Mammary epithelial cell (primary cell): ENCODE measurements at regions of chr15 and their contacts with region 1.

Region 1: DNA sequence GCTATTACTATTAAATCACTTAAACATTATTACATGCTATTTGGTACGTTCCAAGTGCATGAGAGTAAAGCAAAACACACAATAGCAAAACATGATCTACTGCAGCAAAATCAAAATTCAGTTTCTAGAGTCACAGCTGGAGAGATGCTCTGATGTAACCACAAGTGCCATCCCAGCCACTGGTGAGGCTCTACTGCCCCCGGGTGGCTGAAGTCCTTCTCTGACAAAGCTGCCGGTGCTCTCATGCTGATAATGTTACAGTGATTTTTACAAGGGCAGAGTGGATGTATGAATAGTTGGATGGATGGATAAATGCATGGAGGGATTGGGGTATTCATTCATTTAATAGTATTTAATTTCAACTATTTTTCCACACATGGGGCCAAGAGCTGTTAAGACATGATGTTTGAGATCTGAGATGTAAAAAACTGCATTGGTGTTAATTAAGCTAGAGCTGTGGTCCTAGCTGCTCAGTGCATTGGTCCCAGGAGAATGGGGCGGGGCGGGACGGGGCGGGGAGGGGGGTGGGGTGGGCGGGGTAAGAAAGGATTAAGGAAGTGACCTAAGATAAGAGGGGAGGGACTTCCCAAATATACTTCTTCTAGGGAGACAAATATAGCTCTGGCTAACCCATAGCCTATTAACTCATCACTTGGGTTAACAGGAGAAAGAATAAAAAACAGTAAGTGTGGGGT is 5.3 kb upstream of the SPESP1 start:
- DNase-seq: peak; percentile 68
- H3K4me3 ChIP-seq: no peak overlapping the region
- H3K27ac ChIP-seq: no peak overlapping the region
- H3K4me1 ChIP-seq: no peaks in the 10 kb centered on the region
- H3K27me3 ChIP-seq: no peaks in the 10 kb centered on the region
- CTCF ChIP-seq: peak; percentile 92 to 97

Region 2: DNA sequence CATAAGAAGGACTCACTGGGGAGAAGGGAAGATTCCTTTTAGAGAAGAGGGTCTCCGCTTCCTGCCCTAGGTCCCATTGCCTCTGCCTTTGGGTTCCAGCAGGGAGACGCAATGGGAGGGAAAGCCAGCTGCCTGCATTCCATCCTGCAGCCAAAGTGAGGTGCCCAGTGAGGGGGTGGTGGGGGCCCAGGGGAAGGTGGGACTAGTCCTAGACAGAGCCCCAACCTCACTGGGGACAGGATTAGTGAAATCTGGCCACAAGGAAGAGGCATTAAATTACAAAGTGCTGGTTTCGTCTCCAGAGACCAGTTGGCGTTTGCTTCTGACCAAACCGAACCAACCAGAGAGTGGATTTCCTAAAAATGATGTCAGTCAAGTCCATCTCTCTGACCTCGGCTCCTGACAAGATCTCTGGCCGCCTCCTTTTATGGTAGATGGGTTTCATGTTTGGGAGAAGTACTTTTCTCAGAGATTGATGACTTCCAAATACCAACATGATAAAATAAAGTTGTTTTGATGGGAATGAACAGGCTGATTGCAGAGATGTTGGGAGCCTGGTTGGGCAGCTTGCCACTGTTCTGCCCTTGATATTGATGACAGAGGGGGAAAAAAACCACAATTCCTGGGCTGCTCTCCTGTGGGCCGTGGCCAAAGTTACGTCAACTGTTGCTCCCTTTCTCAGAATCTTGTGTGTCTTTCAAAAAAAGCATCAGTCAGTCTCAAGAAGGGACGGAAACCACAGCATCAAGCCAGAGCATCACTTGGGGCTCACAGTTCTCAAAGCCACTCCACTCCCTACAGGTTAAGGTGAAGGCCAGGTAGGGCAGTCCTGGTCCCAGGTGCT is 517.7 kb before region 1 on chr15:
- CTCF ChIA-PET with region 1: no interaction called
- dilution Hi-C with region 1: no loop called
- in situ Hi-C with region 1: no loop called
- intact Hi-C with region 1: no loop called
- DNase-seq: no peak
- H3K4me3 ChIP-seq: no peak overlapping the region
- H3K27ac ChIP-seq: no peak overlapping the region
- H3K4me1 ChIP-seq: no peaks in the 10 kb centered on the region
- H3K27me3 ChIP-seq: no peaks in the 10 kb centered on the region
- CTCF ChIP-seq: no peak

Region 3: DNA sequence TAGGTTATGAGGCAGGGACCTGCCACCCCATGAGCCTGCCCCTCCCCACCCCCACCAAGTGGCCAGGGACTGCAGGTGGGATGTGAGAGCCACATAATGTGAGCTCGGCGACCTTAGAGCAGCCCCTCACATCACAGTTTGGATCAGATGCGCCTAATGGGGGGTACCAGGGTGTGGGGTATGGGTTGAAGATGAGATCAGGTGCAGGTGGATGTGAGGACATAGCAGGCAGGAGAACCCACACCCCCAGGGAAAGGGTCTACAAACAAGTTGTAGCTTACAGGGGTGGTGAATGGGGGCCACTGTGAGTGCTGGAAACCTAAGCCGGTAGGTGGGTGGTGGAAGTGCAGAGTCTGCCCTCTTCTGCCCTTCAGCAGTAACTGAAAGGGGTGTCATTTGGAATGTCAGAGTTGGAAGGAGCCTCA is 252.2 kb before region 1 on chr15:
- CTCF ChIA-PET with region 1: interaction called, 3 read pairs
- dilution Hi-C with region 1: no loop called
- in situ Hi-C with region 1: no loop called
- intact Hi-C with region 1: loop called (anchors 1 kb)
- DNase-seq: no peak
- H3K4me3 ChIP-seq: no peak overlapping the region
- H3K27ac ChIP-seq: no peak overlapping the region
- H3K4me1 ChIP-seq: peaks cover 14% of the 10 kb centered on the region
- H3K27me3 ChIP-seq: no peaks in the 10 kb centered on the region
- CTCF ChIP-seq: peak; percentile 22 to 36

Region 4: GRCh38 chr15:68730471-68730919 is 194.5 kb before region 1 on chr15:
- CTCF ChIA-PET with region 1: no interaction called
- dilution Hi-C with region 1: no loop called
- in situ Hi-C with region 1: no loop called
- intact Hi-C with region 1: loop called (anchors 1 kb)
- DNase-seq: peak; percentile 21
- H3K4me3 ChIP-seq: no peak overlapping the region
- H3K27ac ChIP-seq: no peak overlapping the region
- H3K4me1 ChIP-seq: no peaks in the 10 kb centered on the region
- H3K27me3 ChIP-seq: no peaks in the 10 kb centered on the region
- CTCF ChIP-seq: peak in 1 of 2 donors; percentile 72

Region 5: DNA sequence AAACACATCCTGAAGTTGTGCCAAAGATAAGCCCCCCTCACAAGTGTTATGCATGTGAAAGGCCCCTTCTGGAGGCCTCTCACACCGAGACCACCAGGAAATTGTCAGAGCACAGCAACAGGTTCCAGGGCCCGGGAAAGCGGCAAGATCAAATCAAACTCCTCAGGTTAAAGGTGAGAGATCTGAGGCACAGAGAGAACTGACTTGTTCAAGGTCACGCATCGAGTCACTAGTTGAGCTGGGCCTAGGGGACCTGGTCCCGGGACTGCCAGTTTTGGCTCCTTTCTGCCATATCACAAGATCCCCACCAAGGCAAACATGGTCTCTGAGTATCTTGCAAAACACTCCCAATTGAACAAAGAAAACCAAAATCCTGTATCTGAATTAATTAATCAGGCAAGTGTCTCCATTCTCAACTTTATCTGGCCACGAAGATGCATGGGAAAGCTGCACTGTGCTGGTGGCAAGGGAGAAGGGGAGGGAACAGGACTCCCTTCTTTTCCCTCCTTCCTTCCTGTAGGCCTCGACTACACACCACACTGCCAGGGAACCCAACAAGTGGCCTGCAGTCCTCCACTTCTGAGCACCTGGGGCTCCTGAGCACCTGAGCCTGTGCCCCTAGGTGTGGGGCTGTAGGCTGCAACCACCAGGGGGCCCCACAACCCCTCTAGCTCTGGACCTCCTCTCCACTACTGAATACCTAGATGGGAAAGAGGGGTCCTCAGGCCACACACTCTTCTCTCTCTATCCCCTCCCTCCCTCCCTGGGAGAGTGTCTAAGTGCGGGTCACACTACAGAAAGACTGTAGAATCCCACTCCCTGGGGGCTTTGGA is 141.6 kb before region 1 on chr15:
- CTCF ChIA-PET with region 1: interaction called, 7 read pairs
- dilution Hi-C with region 1: no loop called
- in situ Hi-C with region 1: no loop called
- intact Hi-C with region 1: loop called (anchors 1 kb)
- DNase-seq: peak; percentile 27
- H3K4me3 ChIP-seq: no peak overlapping the region
- H3K27ac ChIP-seq: no peak overlapping the region
- H3K4me1 ChIP-seq: peaks cover 19% of the 10 kb centered on the region
- H3K27me3 ChIP-seq: no peaks in the 10 kb centered on the region
- CTCF ChIP-seq: peak; percentile 56 to 81

Region 6: GRCh38 chr15:68820295-68821189 is 104.5 kb before region 1 on chr15 and contains the start of gene ANP32A:
- CTCF ChIA-PET with region 1: no interaction called
- dilution Hi-C with region 1: no loop called
- in situ Hi-C with region 1: no loop called
- intact Hi-C with region 1: loop called (anchors 5 kb)
- DNase-seq: peak; percentile 96
- H3K4me3 ChIP-seq: peak within 1 kb of the TSS; percentile 78 to 95 (median 85)
- H3K27ac ChIP-seq: peak within 1 kb of the TSS; percentile 72
- H3K4me1 ChIP-seq: peaks cover 19% of the 10 kb centered on the region
- H3K27me3 ChIP-seq: no peaks in the 10 kb centered on the region
- CTCF ChIP-seq: no peak
- total RNA-seq, gene ANP32A: 42.5 to 109 TPM